Calu3 (cell line): ENCODE measurements at regions of chr4 and their contacts with region 1.

Region 1: GRCh38 chr4:38190717-38191178 is 230.6 kb downstream of the PTTG2 start:
- DNase-seq: no peak
- H3K4me3 Mint-ChIP-seq: no peak overlapping the region
- H3K27ac Mint-ChIP-seq: no peak overlapping the region
- H3K4me1 Mint-ChIP-seq: peaks cover 23% of the 10 kb centered on the region
- H3K27me3 Mint-ChIP-seq: no peaks in the 10 kb centered on the region
- CTCF ChIP-seq: no peak

Region 2: DNA sequence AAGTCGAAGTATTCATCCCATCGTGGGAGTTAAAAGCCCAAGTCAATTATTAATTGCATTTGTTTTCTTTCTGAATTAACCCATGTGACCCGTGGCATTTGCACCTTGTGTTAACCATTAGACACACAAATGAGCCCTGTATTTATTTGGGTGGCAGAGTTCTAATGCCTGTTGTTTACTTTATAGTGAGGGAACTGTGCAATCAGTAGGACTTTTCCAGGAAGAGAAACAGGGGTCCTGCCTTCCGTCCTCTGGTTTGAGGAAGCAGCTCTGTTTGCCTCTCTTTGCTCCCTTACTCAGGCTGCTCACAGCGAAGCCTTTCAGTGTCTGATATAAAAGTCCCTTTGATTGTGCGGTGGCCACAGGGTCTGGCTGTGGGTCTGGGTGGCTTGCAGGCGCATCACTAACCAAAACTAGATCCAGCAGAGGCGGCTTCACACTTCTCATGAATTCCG is 33.1 kb after region 1 on chr4:
- CTCF ChIA-PET with region 1: no interaction called
- intact Hi-C with region 1: loop called (anchors 5 kb)
- DNase-seq: peak; percentile 19
- H3K4me3 Mint-ChIP-seq: peak overlapping the region; percentile 14
- H3K27ac Mint-ChIP-seq: peak overlapping the region; percentile 61
- H3K4me1 Mint-ChIP-seq: peaks cover 37% of the 10 kb centered on the region
- H3K27me3 Mint-ChIP-seq: no peaks in the 10 kb centered on the region
- CTCF ChIP-seq: no peak

Region 3: GRCh38 chr4:38230121-38230801 is 39.5 kb after region 1 on chr4:
- CTCF ChIA-PET with region 1: interaction called, 5 read pairs
- intact Hi-C with region 1: loop called (anchors 5 kb)
- DNase-seq: peak; percentile 46
- H3K4me3 Mint-ChIP-seq: peak overlapping the region; percentile 32
- H3K27ac Mint-ChIP-seq: peak overlapping the region; percentile 79
- H3K4me1 Mint-ChIP-seq: peaks cover 40% of the 10 kb centered on the region
- H3K27me3 Mint-ChIP-seq: no peaks in the 10 kb centered on the region
- CTCF ChIP-seq: no peak

Region 4: DNA sequence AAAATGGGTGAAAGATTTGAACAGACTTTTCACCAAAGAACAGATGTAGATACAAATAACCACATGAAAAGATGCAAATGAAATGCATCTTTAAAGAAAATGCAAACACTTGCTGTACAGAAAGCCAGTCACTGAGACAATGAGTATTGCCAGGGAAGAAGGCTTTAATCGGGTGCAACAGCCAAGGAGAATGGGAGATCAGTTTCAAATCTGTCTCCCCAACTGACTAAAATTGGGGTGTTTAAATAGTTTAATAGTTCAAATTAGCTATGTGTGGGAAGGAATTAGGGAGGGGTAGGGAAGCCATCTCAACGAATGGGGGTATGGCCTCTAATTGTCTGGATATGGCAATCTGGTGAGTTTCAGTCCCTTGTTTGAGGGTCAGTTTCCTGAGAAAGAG is 64.8 kb after region 1 on chr4:
- CTCF ChIA-PET with region 1: no interaction called
- intact Hi-C with region 1: no loop called
- DNase-seq: no peak
- H3K4me3 Mint-ChIP-seq: no peak overlapping the region
- H3K27ac Mint-ChIP-seq: no peak overlapping the region
- H3K4me1 Mint-ChIP-seq: no peaks in the 10 kb centered on the region
- H3K27me3 Mint-ChIP-seq: no peaks in the 10 kb centered on the region
- CTCF ChIP-seq: no peak